HepG2 (cell line): ENCODE measurements at regions of chr14 and their contacts with region 1.

Region 1: GRCh38 chr14:50599700-50600444 is 39.9 kb downstream of the ATL1 start:
- DNase-seq: peak; percentile 36
- ATAC-seq: peak; percentile 68
- H3K4me3 ChIP-seq: peak overlapping the region in 1 of 3 experiments; percentile 24; a peak in 3 of 6 replicates
- H3K27ac ChIP-seq: peak overlapping the region; percentile 59
- H3K4me1 ChIP-seq: peaks cover 19% of the 10 kb centered on the region
- H3K27me3 ChIP-seq: no peaks in the 10 kb centered on the region
- CTCF ChIP-seq: peak; percentile 65
- EP300 ChIP-seq: peak in 1 of 2 experiments; percentile 64; a peak in 1 of 4 replicates
- POLR2A ChIP-seq: no peak
- RAD21 ChIP-seq: no peak

Region 2: GRCh38 chr14:50542941-50543418 is 56.9 kb before region 1 on chr14:
- CTCF ChIA-PET with region 1: no interaction called
- POLR2A ChIA-PET with region 1: no interaction called
- in situ Hi-C with region 1: no loop called
- intact Hi-C with region 1: no loop called
- DNase-seq: peak; percentile 77
- ATAC-seq: peak; percentile 91
- H3K4me3 ChIP-seq: no peak overlapping the region; a peak in 1 of 6 replicates
- H3K27ac ChIP-seq: no peak overlapping the region
- H3K4me1 ChIP-seq: peaks cover 34% of the 10 kb centered on the region
- H3K27me3 ChIP-seq: no peaks in the 10 kb centered on the region; a peak in 1 of 5 replicates
- CTCF ChIP-seq: peak; percentile 78
- EP300 ChIP-seq: no peak
- POLR2A ChIP-seq: no peak
- RAD21 ChIP-seq: no peak

Region 3: DNA sequence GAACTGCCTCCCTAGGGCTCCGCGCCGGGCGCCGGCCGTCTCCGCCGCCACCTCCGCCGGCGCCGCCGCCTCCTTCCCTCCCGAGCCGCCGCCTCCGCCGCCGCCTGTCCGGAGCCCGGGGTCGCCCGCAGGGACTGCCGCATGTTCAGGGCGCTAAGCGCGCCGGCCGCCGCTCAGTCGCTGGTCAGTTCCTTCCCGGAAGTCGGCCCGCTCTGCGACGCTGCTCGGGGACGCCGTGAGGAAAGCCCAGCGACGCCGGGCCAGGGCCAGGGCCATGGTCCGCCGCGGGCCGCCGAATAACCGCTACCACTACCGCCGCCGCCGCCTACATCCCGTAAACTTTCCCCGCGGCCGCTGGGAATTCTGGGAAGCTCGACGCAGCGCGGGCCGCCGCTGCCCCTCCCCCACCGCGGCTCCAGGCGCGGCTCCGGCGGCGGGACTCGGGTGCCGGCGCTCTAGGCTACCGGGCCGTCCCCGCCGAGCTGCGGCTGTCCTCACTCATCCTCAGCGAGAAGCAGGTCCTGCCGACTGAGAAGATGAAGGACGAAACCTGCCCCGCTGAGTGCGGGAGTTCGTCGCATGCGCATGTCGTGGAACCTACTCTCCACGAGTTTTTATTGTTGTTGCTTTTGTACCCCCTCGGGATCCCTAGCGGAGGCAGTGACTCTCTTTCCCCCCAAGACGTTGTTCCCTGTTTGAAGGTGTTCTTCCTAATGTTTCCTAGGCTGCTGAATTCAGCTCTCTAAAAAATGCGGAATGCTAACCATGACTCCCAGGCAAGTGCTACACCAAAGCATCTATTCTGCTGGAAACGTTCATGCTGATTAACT is 68.3 kb after region 1 on chr14 and contains the start of gene SAV1:
- CTCF ChIA-PET with region 1: no interaction called
- POLR2A ChIA-PET with region 1: interaction called, 6 read pairs
- in situ Hi-C with region 1: no loop called
- intact Hi-C with region 1: loop called (anchors 2 kb)
- DNase-seq: peak; percentile 68
- ATAC-seq: peak; percentile 91
- H3K4me3 ChIP-seq: peak within 1 kb of the TSS; percentile 84 to 91 (median 85)
- H3K27ac ChIP-seq: peak within 1 kb of the TSS; percentile 82
- H3K4me1 ChIP-seq: peaks cover 40% of the 10 kb centered on the region
- H3K27me3 ChIP-seq: no peaks in the 10 kb centered on the region
- CTCF ChIP-seq: peak; percentile 21; the same call in 1 of the 2 replicates
- EP300 ChIP-seq: peak in 1 of 2 experiments; percentile 13; a peak in 2 of 4 replicates
- POLR2A ChIP-seq: peak; percentile 94 to 99
- RAD21 ChIP-seq: peak; percentile 21; the same call in 1 of the 2 replicates
- total RNA-seq, gene SAV1: 8.1 and 8.2 TPM in 2 replicates

Region 4: DNA sequence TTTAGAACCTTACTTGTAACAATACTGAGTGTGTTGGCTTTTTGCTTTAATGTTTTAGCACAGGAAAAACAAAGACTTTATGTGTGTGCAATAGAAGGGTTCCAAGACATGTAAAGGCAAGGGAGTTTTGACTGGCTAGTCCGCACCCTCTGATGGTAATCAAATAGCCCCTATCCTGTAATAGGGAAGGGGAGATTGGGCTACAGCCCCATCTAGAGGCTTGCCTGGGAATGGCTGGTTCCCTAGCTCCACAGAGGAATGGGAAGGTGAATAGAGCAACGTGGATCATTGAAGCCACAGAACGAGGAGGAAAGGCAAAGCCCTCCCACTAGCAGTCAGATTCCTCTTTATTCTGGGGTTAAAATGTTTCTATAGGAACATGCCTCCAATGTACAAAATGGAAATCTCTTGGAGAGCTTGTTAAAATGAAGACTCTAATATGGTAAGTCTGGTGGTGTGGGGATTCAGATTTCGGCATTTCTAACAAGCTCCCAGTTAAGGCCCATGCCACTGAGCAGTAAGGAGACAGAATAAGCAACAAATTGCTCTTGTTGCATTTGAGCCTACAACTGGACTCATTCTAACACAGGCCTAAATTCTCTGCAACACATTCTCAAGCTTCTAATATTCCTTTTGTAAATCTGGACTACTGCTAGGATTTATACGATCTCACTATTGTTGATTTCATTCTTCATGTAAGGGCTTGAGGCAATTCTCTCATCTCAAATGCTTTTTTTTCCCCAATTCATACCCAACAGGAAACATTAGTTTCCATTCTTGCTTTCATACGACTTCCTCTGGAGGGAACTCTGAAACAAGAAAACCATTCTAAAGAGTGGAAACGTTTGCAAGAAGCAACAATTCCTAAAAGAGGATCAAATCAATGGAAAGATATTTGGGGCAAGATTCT is 174.0 kb after region 1 on chr14:
- CTCF ChIA-PET with region 1: interaction called, 7 read pairs
- POLR2A ChIA-PET with region 1: no interaction called
- in situ Hi-C with region 1: no loop called
- intact Hi-C with region 1: loop called (anchors 1 kb)
- DNase-seq: peak; percentile 11
- ATAC-seq: peak; percentile 88
- H3K4me3 ChIP-seq: no peak overlapping the region
- H3K27ac ChIP-seq: no peak overlapping the region
- H3K4me1 ChIP-seq: no peaks in the 10 kb centered on the region
- H3K27me3 ChIP-seq: no peaks in the 10 kb centered on the region
- CTCF ChIP-seq: peak; percentile 83
- EP300 ChIP-seq: no peak
- POLR2A ChIP-seq: no peak
- RAD21 ChIP-seq: peak; percentile 64; the same call in 1 of the 2 replicates